ENCODE measurements at regions of chr19 and their contacts with region 1.

Region 1: DNA sequence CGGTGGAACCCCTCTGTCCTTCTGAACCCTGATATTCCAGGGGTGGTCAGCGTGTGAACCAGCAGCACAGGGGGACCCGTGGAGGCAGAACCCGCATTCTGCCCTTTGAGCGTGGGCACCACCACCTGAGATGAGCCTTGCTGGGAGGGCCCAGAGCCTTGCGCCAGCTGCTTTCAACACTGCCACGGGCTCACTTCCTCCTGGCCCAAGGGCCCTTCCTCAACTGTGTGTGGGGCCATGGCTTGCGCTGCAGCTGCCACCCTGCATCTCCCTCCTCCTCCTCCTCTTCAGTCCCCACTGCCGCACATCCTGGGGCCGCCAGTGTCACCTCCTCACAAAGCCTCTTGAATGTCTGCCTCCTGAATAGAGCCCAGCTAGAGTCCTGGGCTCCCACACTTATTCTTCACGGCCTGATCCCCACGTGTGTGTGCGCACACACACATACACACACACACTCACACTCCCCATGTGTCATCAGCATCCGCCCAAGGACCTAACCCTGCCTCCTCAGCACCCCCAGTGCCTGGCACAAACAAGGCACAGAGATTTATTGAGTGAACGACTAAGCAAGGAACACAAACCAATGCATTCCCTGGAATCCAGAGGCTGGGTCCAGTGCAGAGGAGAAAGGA is 26.9 kb upstream of the TMEM160 start:
- DNase-seq: no peak
- ATAC-seq: no peak
- H3K4me3 ChIP-seq: no peak overlapping the region
- H3K4me3 Mint-ChIP-seq: no peak overlapping the region
- H3K27ac ChIP-seq: no peak overlapping the region
- H3K27ac Mint-ChIP-seq: no peak overlapping the region
- H3K4me1 ChIP-seq: no peaks in the 10 kb centered on the region
- H3K4me1 Mint-ChIP-seq: peaks cover 8% of the 10 kb centered on the region
- H3K27me3 ChIP-seq: no peaks in the 10 kb centered on the region
- H3K27me3 Mint-ChIP-seq: no peaks in the 10 kb centered on the region
- CTCF ChIP-seq: no peak

Region 2: GRCh38 chr19:47124937-47125668 is 49.8 kb after region 1 on chr19:
- CTCF ChIA-PET with region 1: interaction called, 95 read pairs
- POLR2A ChIA-PET with region 1: no interaction called
- intact Hi-C with region 1: loop called (anchors 1 kb)
- DNase-seq: peak in 4 of 9 experiments; percentile 11 to 79 (median 64)
- ATAC-seq: peak; percentile 55
- H3K4me3 ChIP-seq: no peak overlapping the region
- H3K4me3 Mint-ChIP-seq: no peak overlapping the region
- H3K27ac ChIP-seq: no peak overlapping the region
- H3K27ac Mint-ChIP-seq: no peak overlapping the region
- H3K4me1 ChIP-seq: peaks cover 2% of the 10 kb centered on the region
- H3K4me1 Mint-ChIP-seq: peaks cover 5% of the 10 kb centered on the region
- H3K27me3 ChIP-seq: no peaks in the 10 kb centered on the region
- H3K27me3 Mint-ChIP-seq: no peaks in the 10 kb centered on the region
- CTCF ChIP-seq: peak; percentile 75

Region 3: GRCh38 chr19:47130591-47131227 is 55.4 kb after region 1 on chr19 and contains the start of gene SAE1:
- CTCF ChIA-PET with region 1: interaction called, 95 read pairs
- POLR2A ChIA-PET with region 1: no interaction called
- intact Hi-C with region 1: loop called (anchors 1 kb)
- DNase-seq: peak; percentile 85 to 95 (median 88)
- ATAC-seq: peak; percentile 88
- H3K4me3 ChIP-seq: peak within 1 kb of the TSS; percentile 91 to 99
- H3K4me3 Mint-ChIP-seq: peak within 1 kb of the TSS; percentile 99
- H3K27ac ChIP-seq: peak within 1 kb of the TSS; percentile 59 to 86
- H3K27ac Mint-ChIP-seq: peak within 1 kb of the TSS; percentile 91
- H3K4me1 ChIP-seq: peaks cover 37% of the 10 kb centered on the region
- H3K4me1 Mint-ChIP-seq: peaks cover 47% of the 10 kb centered on the region
- H3K27me3 ChIP-seq: no peaks in the 10 kb centered on the region
- H3K27me3 Mint-ChIP-seq: no peaks in the 10 kb centered on the region
- CTCF ChIP-seq: peak; percentile 67
- total RNA-seq, gene SAE1: 22.4 TPM

Measured in CD8-positive, alpha-beta T cell (primary cell).